GM12878 (cell line): ENCODE measurements at regions of chr16 and their contacts with region 1.

Region 1: GRCh38 chr16:64969221-64969620 is 152.6 kb downstream of the CDH11 start:
- DNase-seq: no peak
- ATAC-seq: no peak
- H3K4me3 ChIP-seq: no peak overlapping the region
- H3K27ac ChIP-seq: no peak overlapping the region
- H3K4me1 ChIP-seq: no peaks in the 10 kb centered on the region
- H3K27me3 ChIP-seq: no peaks in the 10 kb centered on the region
- CTCF ChIP-seq: no peak
- EP300 ChIP-seq: no peak
- POLR2A ChIP-seq: no peak
- RAD21 ChIP-seq: no peak

Region 2: DNA sequence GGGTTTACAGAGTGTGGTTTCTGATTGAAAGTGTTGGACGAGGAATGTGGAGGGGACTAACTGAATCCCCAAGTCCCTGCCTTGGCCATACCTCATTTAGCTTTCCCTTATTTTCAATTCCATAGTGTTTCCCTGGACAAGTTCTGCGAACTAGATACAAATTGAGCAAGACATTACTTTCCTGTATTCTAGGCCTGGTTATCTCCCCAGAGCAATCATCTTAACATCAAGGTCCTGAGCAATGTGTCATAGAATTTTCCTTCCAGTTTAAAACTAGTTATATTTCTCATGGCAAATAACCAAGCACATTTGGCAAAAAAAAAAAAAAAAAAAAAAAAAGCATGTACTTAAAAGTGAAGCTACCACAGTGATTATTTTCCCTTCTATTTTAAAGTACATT is 177.5 kb before region 1 on chr16:
- CTCF ChIA-PET with region 1: no interaction called
- POLR2A ChIA-PET with region 1: no interaction called
- RAD21 ChIA-PET with region 1: no interaction called
- SMC1A ChIA-PET with region 1: no interaction called
- in situ Hi-C with region 1: no loop called
- intact Hi-C with region 1: no loop called
- DNase-seq: no peak
- ATAC-seq: no peak
- H3K4me3 ChIP-seq: no peak overlapping the region
- H3K27ac ChIP-seq: no peak overlapping the region
- H3K4me1 ChIP-seq: no peaks in the 10 kb centered on the region
- H3K27me3 ChIP-seq: no peaks in the 10 kb centered on the region
- CTCF ChIP-seq: no peak
- EP300 ChIP-seq: no peak
- POLR2A ChIP-seq: no peak
- RAD21 ChIP-seq: no peak

Region 3: GRCh38 chr16:64983963-64984362 is 14.7 kb after region 1 on chr16:
- CTCF ChIA-PET with region 1: interaction called, 10 read pairs
- POLR2A ChIA-PET with region 1: no interaction called
- RAD21 ChIA-PET with region 1: no interaction called
- SMC1A ChIA-PET with region 1: interaction called, 7 read pairs
- in situ Hi-C with region 1: no loop called
- intact Hi-C with region 1: no loop called
- DNase-seq: no peak
- ATAC-seq: peak; percentile 88
- H3K4me3 ChIP-seq: no peak overlapping the region
- H3K27ac ChIP-seq: no peak overlapping the region
- H3K4me1 ChIP-seq: no peaks in the 10 kb centered on the region
- H3K27me3 ChIP-seq: no peaks in the 10 kb centered on the region
- CTCF ChIP-seq: peak; percentile 36 to 58 (median 55); a peak in 4 of 6 replicates
- EP300 ChIP-seq: no peak
- POLR2A ChIP-seq: no peak
- RAD21 ChIP-seq: peak; percentile 47

Region 4: DNA sequence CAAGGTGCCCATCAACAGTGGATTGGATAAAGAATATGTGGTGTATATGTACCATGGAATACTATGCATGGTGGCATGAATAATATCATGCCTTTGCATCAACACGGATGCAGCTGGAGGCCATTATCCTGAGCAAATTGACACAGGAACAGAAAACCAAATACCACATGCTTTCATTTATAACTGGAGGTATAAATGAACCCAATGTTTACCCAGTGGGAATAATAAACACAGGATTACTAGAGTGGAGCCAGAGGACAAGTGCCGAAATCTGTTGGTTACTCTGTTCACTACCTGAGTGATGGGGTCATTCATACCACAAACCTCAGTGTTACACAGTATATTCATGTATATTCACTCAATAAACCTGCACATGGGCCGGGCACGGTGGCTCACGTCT is 27.4 kb after region 1 on chr16:
- CTCF ChIA-PET with region 1: no interaction called
- POLR2A ChIA-PET with region 1: no interaction called
- RAD21 ChIA-PET with region 1: no interaction called
- SMC1A ChIA-PET with region 1: no interaction called
- in situ Hi-C with region 1: no loop called
- intact Hi-C with region 1: no loop called
- DNase-seq: no peak
- ATAC-seq: no peak
- H3K4me3 ChIP-seq: no peak overlapping the region
- H3K27ac ChIP-seq: no peak overlapping the region
- H3K4me1 ChIP-seq: no peaks in the 10 kb centered on the region
- H3K27me3 ChIP-seq: no peaks in the 10 kb centered on the region
- CTCF ChIP-seq: no peak
- EP300 ChIP-seq: no peak
- POLR2A ChIP-seq: no peak
- RAD21 ChIP-seq: no peak